Aorta (tissue), 5 donors: ENCODE measurements at regions of chr16 and their contacts with region 1.

Region 1: GRCh38 chr16:67561824-67562525 is 351 bp upstream of the CTCF start:
- DNase-seq: peak; percentile 98 to 99
- ATAC-seq: peak; percentile 95
- H3K4me3 ChIP-seq: peak overlapping the region; percentile 77 to 81
- H3K27ac ChIP-seq: peak overlapping the region in 1 of 2 donors; percentile 64
- H3K4me1 ChIP-seq: no peaks in the 10 kb centered on the region
- H3K27me3 ChIP-seq: no peaks in the 10 kb centered on the region

Region 2: GRCh38 chr16:67528222-67528869 is 33.6 kb before region 1 on chr16 and contains the start of gene RIPOR1:
- intact Hi-C with region 1: loop called (anchors 2 to 5 kb)
- DNase-seq: peak; percentile 76 to 92
- ATAC-seq: peak; percentile 67
- H3K4me3 ChIP-seq: peak within 1 kb of the TSS; percentile 84 to 93
- H3K27ac ChIP-seq: peak within 1 kb of the TSS; percentile 73 to 80
- H3K4me1 ChIP-seq: no peaks in the 10 kb centered on the region
- H3K27me3 ChIP-seq: no peaks in the 10 kb centered on the region
- total RNA-seq, gene RIPOR1: 105 to 120 TPM

Region 3: GRCh38 chr16:67660564-67661028 is 98.6 kb after region 1 on chr16 and contains the start of gene PARD6A:
- intact Hi-C with region 1: loop called (anchors 2 to 5 kb)
- DNase-seq: peak; percentile 98
- ATAC-seq: peak; percentile 95
- H3K4me3 ChIP-seq: peak within 1 kb of the TSS; percentile 63 to 64
- H3K27ac ChIP-seq: peak within 1 kb of the TSS in 1 of 2 donors; percentile 89
- H3K4me1 ChIP-seq: no peaks in the 10 kb centered on the region
- H3K27me3 ChIP-seq: no peaks in the 10 kb centered on the region
- total RNA-seq, gene PARD6A: 3.9 to 5.3 TPM

Region 4: GRCh38 chr16:67667817-67668494 is 106.0 kb after region 1 on chr16:
- intact Hi-C with region 1: loop called (anchors 1 to 5 kb)
- DNase-seq: peak; percentile 92 to 93
- ATAC-seq: peak; percentile 87
- H3K4me3 ChIP-seq: no peak overlapping the region
- H3K27ac ChIP-seq: peak overlapping the region in 1 of 2 donors; percentile 4
- H3K4me1 ChIP-seq: no peaks in the 10 kb centered on the region
- H3K27me3 ChIP-seq: no peaks in the 10 kb centered on the region